ENCODE measurements at regions of chr13 and their contacts with region 1.

Region 1: GRCh38 chr13:44050450-44051063 is 170.9 kb downstream of the LACC1 start:
- DNase-seq: no peak
- H3K4me3 ChIP-seq: no peak overlapping the region
- H3K27ac ChIP-seq: no peak overlapping the region
- H3K4me1 ChIP-seq: no peaks in the 10 kb centered on the region
- H3K27me3 ChIP-seq: no peaks in the 10 kb centered on the region
- CTCF ChIP-seq: peak; percentile 52 to 75 (median 64)
- POLR2A ChIP-seq: no peak

Region 2: DNA sequence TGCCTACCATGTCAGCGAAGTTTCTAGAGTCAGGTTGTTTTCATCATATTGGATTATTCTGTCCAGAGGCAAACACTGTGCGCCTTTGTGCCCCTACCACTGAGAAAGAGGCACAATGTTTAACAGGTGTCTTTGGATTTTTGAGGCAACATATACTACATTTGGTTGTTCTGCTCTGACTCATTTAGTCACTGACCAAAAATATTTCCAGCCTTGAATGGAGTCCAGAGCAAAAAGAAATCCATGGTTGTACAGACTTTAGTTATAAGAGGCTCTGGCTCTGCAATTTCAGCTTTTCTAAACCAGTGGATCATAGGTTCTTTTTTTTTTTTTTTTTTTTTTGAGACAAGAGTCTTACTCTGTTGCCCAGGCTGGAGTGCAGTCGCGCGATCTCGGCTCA is 135.1 kb before region 1 on chr13:
- intact Hi-C with region 1: loop called (anchors 10 kb)
- DNase-seq: no peak
- H3K4me3 ChIP-seq: no peak overlapping the region
- H3K27ac ChIP-seq: no peak overlapping the region
- H3K4me1 ChIP-seq: no peaks in the 10 kb centered on the region
- H3K27me3 ChIP-seq: no peaks in the 10 kb centered on the region
- CTCF ChIP-seq: no peak
- POLR2A ChIP-seq: no peak

Region 3: GRCh38 chr13:44116562-44117332 is 66.2 kb after region 1 on chr13:
- intact Hi-C with region 1: no loop called
- DNase-seq: no peak
- H3K4me3 ChIP-seq: no peak overlapping the region
- H3K27ac ChIP-seq: peak overlapping the region; percentile 27 to 29
- H3K4me1 ChIP-seq: no peaks in the 10 kb centered on the region
- H3K27me3 ChIP-seq: no peaks in the 10 kb centered on the region
- CTCF ChIP-seq: no peak
- POLR2A ChIP-seq: no peak

Region 4: DNA sequence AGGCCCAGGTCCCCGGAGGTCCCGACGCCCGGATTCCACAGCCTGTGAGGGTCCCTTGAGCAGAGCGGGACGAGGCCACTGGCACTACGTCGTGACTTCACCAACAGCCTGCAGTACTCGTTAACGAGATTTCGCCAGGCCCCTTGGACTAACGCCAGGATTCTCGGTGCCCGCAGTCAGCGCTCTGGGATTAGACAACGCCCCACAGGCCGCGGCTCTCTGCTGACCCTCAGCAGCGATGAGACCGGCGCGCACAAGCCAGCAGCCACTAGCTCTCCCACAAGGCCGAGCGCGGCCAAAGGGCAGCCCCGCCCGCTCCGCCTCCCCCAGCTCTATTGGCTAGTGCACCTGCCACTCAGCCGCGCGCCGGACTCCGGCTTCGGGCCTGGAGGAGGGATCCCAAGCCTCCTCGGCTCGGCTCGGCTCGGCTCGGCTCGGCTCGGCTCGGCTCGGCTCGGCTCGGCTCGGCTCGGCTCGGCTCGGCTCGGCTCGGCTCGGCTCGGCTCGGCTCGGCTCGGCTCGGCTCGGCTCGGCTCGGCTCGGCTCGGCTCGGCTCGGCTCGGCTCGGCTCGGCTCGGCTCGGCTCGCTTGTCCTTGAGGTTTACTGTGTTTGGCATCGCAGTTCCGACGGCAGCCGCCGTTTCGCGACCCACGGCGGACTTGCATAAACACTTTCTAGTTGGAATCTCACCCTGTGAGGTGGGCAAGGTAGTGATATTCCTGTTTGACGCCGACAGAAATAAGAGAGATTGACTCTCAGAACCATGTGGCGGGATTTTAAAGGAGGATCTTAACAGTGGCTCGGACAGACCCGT is 91.4 kb after region 1 on chr13:
- intact Hi-C with region 1: loop called (anchors 10 kb)
- DNase-seq: peak; percentile 97 to 98
- H3K4me3 ChIP-seq: peak overlapping the region; percentile 44 to 68 (median 59)
- H3K27ac ChIP-seq: peak overlapping the region; percentile 96 to 97
- H3K4me1 ChIP-seq: peaks cover 0 to 6% of the 10 kb centered on the region in 2 donors
- H3K27me3 ChIP-seq: no peaks in the 10 kb centered on the region
- CTCF ChIP-seq: peak in 2 of 3 donors; percentile 38 to 54
- POLR2A ChIP-seq: peak; percentile 91